Naive thymus-derived CD4-positive, alpha-beta T cell (primary cell): ENCODE measurements at regions of chr19 and their contacts with region 1.

Region 1: GRCh38 chr19:45178262-45179071 is at the start of gene BLOC1S3:
- DNase-seq: peak; percentile 97 to 100 (median 100)
- ATAC-seq: peak; percentile 93
- H3K4me3 ChIP-seq: peak within 1 kb of the TSS; percentile 88
- H3K4me3 Mint-ChIP-seq: peak within 1 kb of the TSS; percentile 87 to 99 (median 96)
- H3K27ac ChIP-seq: peak within 1 kb of the TSS; percentile 83
- H3K27ac Mint-ChIP-seq: peak within 1 kb of the TSS; percentile 88 to 98 (median 94)
- H3K4me1 ChIP-seq: peaks cover 23 to 34% of the 10 kb centered on the region in 2 donors
- H3K4me1 Mint-ChIP-seq: peaks cover 9 to 63% (median 49%) of the 10 kb centered on the region in 7 donors
- H3K27me3 ChIP-seq: no peaks in the 10 kb centered on the region
- H3K27me3 Mint-ChIP-seq: no peaks in the 10 kb centered on the region
- total RNA-seq, gene BLOC1S3: 13.7 to 24.9 (median 15.4) TPM

Region 2: GRCh38 chr19:44954824-44955586 is 223.5 kb before region 1 on chr19 and contains the start of gene CLPTM1:
- CTCF ChIA-PET with region 1: no interaction called
- POLR2A ChIA-PET with region 1: interaction called, 3 read pairs
- intact Hi-C with region 1: loop called (anchors 1 kb)
- DNase-seq: peak; percentile 85 to 96 (median 94)
- ATAC-seq: peak; percentile 97
- H3K4me3 ChIP-seq: peak within 1 kb of the TSS; percentile 92
- H3K4me3 Mint-ChIP-seq: peak within 1 kb of the TSS; percentile 90 to 99 (median 98)
- H3K27ac ChIP-seq: peak within 1 kb of the TSS; percentile 92
- H3K27ac Mint-ChIP-seq: peak within 1 kb of the TSS; percentile 97 to 99 (median 98)
- H3K4me1 ChIP-seq: peaks cover 12 to 24% of the 10 kb centered on the region in 2 donors
- H3K4me1 Mint-ChIP-seq: peaks cover 27 to 63% (median 56%) of the 10 kb centered on the region in 7 donors
- H3K27me3 ChIP-seq: no peaks in the 10 kb centered on the region
- H3K27me3 Mint-ChIP-seq: no peaks in the 10 kb centered on the region
- total RNA-seq, gene CLPTM1: 68.4 to 83.3 (median 76.8) TPM

Region 3: DNA sequence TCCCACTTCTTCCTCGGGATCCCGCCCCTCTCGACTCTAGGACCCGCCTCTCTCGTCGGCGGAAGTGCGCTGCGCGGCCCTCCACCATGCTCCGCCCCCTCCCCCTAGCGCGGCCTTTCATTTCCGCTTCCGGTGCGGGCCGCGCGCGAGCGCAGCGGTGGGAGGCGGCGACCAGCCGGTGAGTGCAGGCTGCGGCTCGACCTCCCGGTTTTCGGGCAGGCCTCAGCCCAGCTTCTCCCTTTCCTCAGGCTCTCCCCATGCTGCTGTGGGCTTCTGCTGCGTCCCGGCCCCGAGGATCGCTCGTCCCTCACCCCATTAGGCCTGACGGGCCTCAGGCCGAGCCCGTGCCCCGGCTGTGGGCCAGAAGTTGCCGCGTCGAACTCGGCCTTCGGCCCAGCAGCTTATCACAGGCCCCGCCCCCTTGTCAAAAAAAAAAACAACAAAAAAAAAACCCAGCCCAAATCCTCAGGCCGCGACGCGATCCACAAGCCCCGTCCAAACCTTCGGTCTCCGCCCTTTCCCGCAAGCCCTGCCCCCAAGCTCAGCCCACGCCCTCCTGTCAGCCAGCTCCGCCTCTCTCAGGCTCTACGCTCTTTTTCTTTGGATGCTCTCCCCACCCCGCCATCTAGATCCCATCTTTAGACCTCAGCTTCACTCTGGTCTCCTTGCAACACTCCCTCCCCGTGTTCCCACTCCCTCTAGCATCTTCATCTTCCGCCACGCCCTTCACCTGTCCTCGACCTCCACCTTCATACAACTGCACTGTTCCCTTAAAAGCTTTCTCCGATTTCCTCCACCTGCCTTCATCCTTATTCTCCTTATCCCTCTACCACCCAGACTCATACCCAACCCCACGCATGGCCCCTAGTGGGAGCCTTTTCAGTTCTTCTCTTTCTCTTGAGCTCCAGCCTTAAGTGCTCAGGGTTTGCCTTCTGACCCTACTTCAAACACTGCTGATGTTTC is 139.3 kb before region 1 on chr19 and contains the start of gene CLASRP:
- CTCF ChIA-PET with region 1: interaction called, 6 read pairs
- POLR2A ChIA-PET with region 1: interaction called, 13 read pairs
- intact Hi-C with region 1: loop called (anchors 1 kb)
- DNase-seq: peak; percentile 73 to 92 (median 85)
- ATAC-seq: peak; percentile 96
- H3K4me3 ChIP-seq: peak within 1 kb of the TSS; percentile 85
- H3K4me3 Mint-ChIP-seq: peak within 1 kb of the TSS; percentile 89 to 100 (median 99)
- H3K27ac ChIP-seq: peak within 1 kb of the TSS; percentile 100
- H3K27ac Mint-ChIP-seq: peak within 1 kb of the TSS; percentile 90 to 99 (median 98)
- H3K4me1 ChIP-seq: peaks cover 15 to 24% of the 10 kb centered on the region in 2 donors
- H3K4me1 Mint-ChIP-seq: peaks cover 26 to 43% (median 33%) of the 10 kb centered on the region in 7 donors
- H3K27me3 ChIP-seq: no peaks in the 10 kb centered on the region
- H3K27me3 Mint-ChIP-seq: no peaks in the 10 kb centered on the region
- total RNA-seq, gene CLASRP: 94.7 to 185 (median 163) TPM

Region 4: GRCh38 chr19:45152504-45153338 is 25.7 kb before region 1 on chr19:
- CTCF ChIA-PET with region 1: interaction called, 3 read pairs
- POLR2A ChIA-PET with region 1: interaction called, 29 read pairs
- intact Hi-C with region 1: loop called in 1 of 2 experiments (anchors 1 kb)
- DNase-seq: peak; percentile 26 to 63 (median 50)
- ATAC-seq: peak; percentile 70
- H3K4me3 ChIP-seq: peak overlapping the region; percentile 51
- H3K4me3 Mint-ChIP-seq: peak overlapping the region; percentile 76 to 90 (median 82)
- H3K27ac ChIP-seq: no peak overlapping the region
- H3K27ac Mint-ChIP-seq: peak overlapping the region in 7 of 9 donors; percentile 14 to 78 (median 57)
- H3K4me1 ChIP-seq: peaks cover 7 to 21% of the 10 kb centered on the region in 2 donors
- H3K4me1 Mint-ChIP-seq: peaks cover 9 to 28% (median 22%) of the 10 kb centered on the region in 7 donors
- H3K27me3 ChIP-seq: no peaks in the 10 kb centered on the region
- H3K27me3 Mint-ChIP-seq: peaks cover 6 to 30% (median 10%) of the 10 kb centered on the region in 5 donors

Region 5: DNA sequence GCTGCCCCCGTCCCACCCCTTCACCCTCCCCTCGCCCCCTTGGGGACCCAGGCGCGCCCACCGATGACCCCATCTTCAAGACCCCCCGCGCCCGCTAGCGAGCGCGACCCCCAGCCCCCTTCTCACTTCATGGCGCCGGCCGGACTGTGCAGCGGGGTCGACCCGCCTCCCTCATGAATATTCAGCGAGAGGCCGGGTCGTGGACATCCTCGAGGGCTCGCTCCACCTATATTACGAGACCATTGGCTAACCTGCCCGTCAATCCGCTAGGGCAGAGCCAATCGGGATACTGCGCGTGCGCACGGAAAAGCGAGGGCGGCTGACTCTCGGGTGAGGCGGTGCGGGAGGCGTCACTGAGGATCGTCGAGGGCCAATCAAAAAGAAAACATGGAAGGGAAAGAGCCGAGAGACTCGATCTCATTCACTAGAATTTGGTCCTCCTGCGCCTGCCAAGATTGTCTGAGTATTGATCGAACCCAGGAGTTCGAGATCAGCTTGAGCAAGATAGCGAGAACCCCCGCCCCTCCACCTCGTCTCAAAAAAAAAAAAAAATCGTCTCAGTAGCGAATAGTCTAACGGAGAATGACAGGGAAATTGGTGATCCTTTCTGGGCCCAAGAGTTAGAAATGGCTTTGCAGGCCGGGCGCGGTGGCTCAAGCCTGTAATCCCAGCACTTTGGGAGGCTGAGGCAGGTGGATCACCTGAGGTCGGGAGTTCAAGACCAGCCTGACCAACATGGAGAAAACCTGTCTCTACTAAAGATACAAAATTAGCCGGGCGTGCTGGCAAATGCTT is 192.1 kb after region 1 on chr19 and contains the start of gene ERCC2:
- CTCF ChIA-PET with region 1: no interaction called
- POLR2A ChIA-PET with region 1: no interaction called
- intact Hi-C with region 1: loop called in 1 of 2 experiments (anchors 1 kb)
- DNase-seq: peak; percentile 98 to 100 (median 99)
- ATAC-seq: peak; percentile 99
- H3K4me3 ChIP-seq: peak within 1 kb of the TSS; percentile 72
- H3K4me3 Mint-ChIP-seq: peak within 1 kb of the TSS; percentile 84 to 98 (median 95)
- H3K27ac ChIP-seq: peak within 1 kb of the TSS; percentile 67
- H3K27ac Mint-ChIP-seq: peak within 1 kb of the TSS; percentile 87 to 99 (median 98)
- H3K4me1 ChIP-seq: peaks cover 0 to 6% of the 10 kb centered on the region in 2 donors
- H3K4me1 Mint-ChIP-seq: peaks cover 5 to 21% (median 18%) of the 10 kb centered on the region in 7 donors
- H3K27me3 ChIP-seq: no peaks in the 10 kb centered on the region
- H3K27me3 Mint-ChIP-seq: peaks cover 0 to 2% (median 0%) of the 10 kb centered on the region in 5 donors
- total RNA-seq, gene ERCC2: 14.4 to 25.1 (median 19.2) TPM

Region 6: GRCh38 chr19:45506246-45506990 is 328.0 kb after region 1 on chr19:
- CTCF ChIA-PET with region 1: no interaction called
- POLR2A ChIA-PET with region 1: no interaction called
- intact Hi-C with region 1: loop called (anchors 2 kb)
- DNase-seq: peak; percentile 95 to 99 (median 98)
- ATAC-seq: peak; percentile 88
- H3K4me3 ChIP-seq: peak overlapping the region; percentile 99
- H3K4me3 Mint-ChIP-seq: peak overlapping the region; percentile 91 to 96 (median 94)
- H3K27ac ChIP-seq: peak overlapping the region; percentile 87
- H3K27ac Mint-ChIP-seq: peak overlapping the region; percentile 91 to 98 (median 97)
- H3K4me1 ChIP-seq: peaks cover 14 to 20% of the 10 kb centered on the region in 2 donors
- H3K4me1 Mint-ChIP-seq: peaks cover 29 to 46% (median 34%) of the 10 kb centered on the region in 7 donors
- H3K27me3 ChIP-seq: no peaks in the 10 kb centered on the region
- H3K27me3 Mint-ChIP-seq: no peaks in the 10 kb centered on the region

Region 7: GRCh38 chr19:45886427-45887199 is 708.1 kb after region 1 on chr19:
- CTCF ChIA-PET with region 1: no interaction called
- POLR2A ChIA-PET with region 1: no interaction called
- intact Hi-C with region 1: loop called in 1 of 2 experiments (anchors 5 kb)
- DNase-seq: peak; percentile 76 to 93 (median 88)
- ATAC-seq: peak; percentile 85
- H3K4me3 ChIP-seq: peak overlapping the region; percentile 99
- H3K4me3 Mint-ChIP-seq: peak overlapping the region; percentile 93 to 99 (median 97)
- H3K27ac ChIP-seq: peak overlapping the region; percentile 86
- H3K27ac Mint-ChIP-seq: peak overlapping the region; percentile 92 to 99 (median 97)
- H3K4me1 ChIP-seq: peaks cover 15 to 34% of the 10 kb centered on the region in 2 donors
- H3K4me1 Mint-ChIP-seq: peaks cover 10 to 32% (median 19%) of the 10 kb centered on the region in 7 donors
- H3K27me3 ChIP-seq: no peaks in the 10 kb centered on the region
- H3K27me3 Mint-ChIP-seq: no peaks in the 10 kb centered on the region